ENCODE measurements at regions of chr7 and their contacts with region 1.

Region 1: GRCh38 chr7:1412322-1413261 is 46.7 kb downstream of the MICALL2 start:
- DNase-seq: peak; percentile 100
- H3K4me3 ChIP-seq: no peak overlapping the region; a peak in 2 of 4 replicates
- H3K27ac ChIP-seq: no peak overlapping the region
- H3K4me1 ChIP-seq: peaks cover 0 to 5% of the 10 kb centered on the region in 2 experiments; a peak in 2 of 4 replicates
- H3K27me3 ChIP-seq: peaks cover 76% of the 10 kb centered on the region
- CTCF ChIP-seq: peak; percentile 92
- EP300 ChIP-seq: no peak
- RAD21 ChIP-seq: peak; percentile 80

Region 2: DNA sequence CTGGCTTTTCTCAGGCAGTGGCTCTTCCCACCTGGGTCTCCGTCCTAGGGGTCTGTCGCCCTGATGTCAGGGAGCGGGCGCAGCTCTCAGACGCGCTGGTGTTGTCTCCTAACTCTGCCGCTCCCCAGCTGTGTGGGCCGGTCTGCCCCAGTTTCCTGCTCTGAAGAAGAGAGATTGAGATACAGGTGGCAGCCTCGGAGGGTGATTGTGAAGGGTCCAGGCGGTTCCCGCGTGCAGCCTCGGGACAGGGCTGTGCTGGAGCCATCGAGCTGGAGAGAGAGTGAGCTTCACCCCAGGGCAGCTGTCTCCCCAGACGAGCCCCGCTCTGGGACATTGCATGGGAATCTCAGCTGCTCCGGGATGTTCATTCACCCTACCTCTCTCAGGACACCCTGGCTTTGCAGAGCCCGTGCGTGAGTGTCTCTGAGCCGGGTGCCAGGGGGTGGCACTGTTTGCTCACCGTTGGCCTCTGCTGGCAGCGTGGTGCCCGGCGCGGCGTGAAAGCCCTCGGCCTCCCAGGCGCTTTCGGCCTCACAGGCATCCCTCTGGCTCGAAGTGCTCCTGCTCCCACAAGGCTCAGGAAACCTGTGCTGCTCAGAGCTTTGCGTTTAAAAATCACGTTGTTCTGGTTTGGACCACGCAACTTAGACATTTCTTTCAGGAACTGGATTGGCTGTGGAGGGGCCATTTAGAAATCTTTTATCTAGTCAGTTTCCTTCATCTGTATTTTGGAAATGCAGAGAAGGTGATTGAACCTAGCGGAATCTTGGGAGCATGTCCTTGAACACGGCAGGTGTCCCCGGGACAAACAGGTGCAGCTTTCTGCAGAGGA is 218.8 kb before region 1 on chr7:
- CTCF ChIA-PET with region 1: interaction called, 42 read pairs
- POLR2A ChIA-PET with region 1: no interaction called
- DNase-seq: peak; percentile 90
- H3K4me3 ChIP-seq: no peak overlapping the region
- H3K27ac ChIP-seq: no peak overlapping the region
- H3K4me1 ChIP-seq: peaks cover 0 to 3% of the 10 kb centered on the region in 2 experiments; a peak in 1 of 4 replicates
- H3K27me3 ChIP-seq: peaks cover 29% of the 10 kb centered on the region; the same call in 1 of the 2 replicates
- CTCF ChIP-seq: peak; percentile 75
- EP300 ChIP-seq: no peak
- RAD21 ChIP-seq: peak; percentile 90

Region 3: DNA sequence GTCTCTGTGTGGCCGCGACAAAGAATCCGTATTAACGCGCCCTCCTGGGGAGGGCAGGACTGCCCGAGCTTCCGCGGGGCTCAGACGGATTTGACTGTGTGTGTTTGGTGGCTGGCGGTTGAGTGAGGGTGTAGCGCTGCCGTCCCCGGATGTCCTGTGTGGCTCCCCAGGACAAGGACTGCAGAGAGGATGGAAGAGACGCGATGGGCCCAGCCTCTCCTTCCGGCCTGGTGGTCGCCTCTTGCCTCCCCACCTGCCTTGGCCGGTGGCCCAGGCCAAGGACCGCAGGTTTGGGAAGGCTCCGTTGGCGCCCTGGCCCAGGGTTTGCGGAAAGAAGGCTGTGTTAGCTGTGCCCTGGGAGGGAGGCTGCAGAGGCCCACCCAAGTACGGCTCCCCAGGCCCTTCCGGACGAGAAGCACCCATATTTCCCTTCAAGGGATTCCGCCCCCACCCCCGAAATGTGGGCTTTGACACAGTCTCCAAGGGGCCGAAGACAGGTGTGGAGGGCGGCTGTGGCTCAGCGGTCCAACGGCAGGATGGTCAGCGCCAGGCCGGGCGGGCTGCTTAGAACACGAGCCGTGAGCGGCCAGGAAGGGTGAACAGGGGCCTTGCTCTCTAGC is 177.6 kb before region 1 on chr7:
- CTCF ChIA-PET with region 1: interaction called, 14 read pairs
- POLR2A ChIA-PET with region 1: no interaction called
- DNase-seq: no peak
- H3K4me3 ChIP-seq: no peak overlapping the region
- H3K27ac ChIP-seq: no peak overlapping the region
- H3K4me1 ChIP-seq: no peaks in the 10 kb centered on the region
- H3K27me3 ChIP-seq: peaks cover 84% of the 10 kb centered on the region
- CTCF ChIP-seq: no peak
- EP300 ChIP-seq: no peak
- RAD21 ChIP-seq: no peak

Region 4: GRCh38 chr7:1284743-1285321 is 127.8 kb before region 1 on chr7:
- CTCF ChIA-PET with region 1: interaction called, 12 read pairs
- POLR2A ChIA-PET with region 1: no interaction called
- DNase-seq: no peak
- H3K4me3 ChIP-seq: no peak overlapping the region
- H3K27ac ChIP-seq: no peak overlapping the region
- H3K4me1 ChIP-seq: no peaks in the 10 kb centered on the region
- H3K27me3 ChIP-seq: peaks cover 85% of the 10 kb centered on the region
- CTCF ChIP-seq: no peak
- EP300 ChIP-seq: no peak
- RAD21 ChIP-seq: no peak

Region 5: DNA sequence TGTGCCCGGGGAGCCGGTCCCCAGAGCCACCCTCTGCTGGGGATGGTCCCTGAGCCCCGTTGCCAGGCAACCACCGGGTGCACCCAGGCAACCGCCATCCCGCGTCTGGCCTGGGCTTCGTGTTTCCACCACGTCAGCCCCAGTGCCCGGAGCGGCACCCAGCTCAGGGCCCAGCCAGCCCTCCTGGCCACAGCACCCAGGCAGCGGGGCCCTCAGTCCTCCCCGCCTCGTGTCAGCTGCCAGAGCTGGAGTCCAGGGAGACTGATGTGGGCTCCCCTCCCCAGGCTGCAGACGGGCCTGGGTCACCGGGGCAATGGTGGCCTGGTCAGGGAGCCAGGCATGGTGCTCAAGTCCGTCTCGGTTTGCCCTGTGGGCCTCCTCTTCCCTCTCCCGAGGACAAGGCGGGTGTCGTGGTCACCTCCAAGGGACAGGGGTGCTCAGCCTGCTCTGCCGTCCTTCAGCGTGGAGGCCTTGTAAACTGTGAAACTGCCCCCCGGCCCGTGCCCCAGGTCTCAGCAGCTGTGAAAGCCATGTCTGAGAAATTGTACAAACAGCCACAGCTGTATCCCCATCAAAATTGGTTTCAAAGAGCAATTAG is 25.9 kb before region 1 on chr7:
- CTCF ChIA-PET with region 1: interaction called, 12 read pairs
- POLR2A ChIA-PET with region 1: no interaction called
- DNase-seq: peak; percentile 89
- H3K4me3 ChIP-seq: no peak overlapping the region
- H3K27ac ChIP-seq: no peak overlapping the region
- H3K4me1 ChIP-seq: no peaks in the 10 kb centered on the region; a peak in 1 of 4 replicates
- H3K27me3 ChIP-seq: peaks cover 97% of the 10 kb centered on the region
- CTCF ChIP-seq: no peak
- EP300 ChIP-seq: no peak
- RAD21 ChIP-seq: no peak

Region 6: GRCh38 chr7:2796358-2797352 is 1384.1 kb after region 1 on chr7:
- CTCF ChIA-PET with region 1: no interaction called
- POLR2A ChIA-PET with region 1: no interaction called
- DNase-seq: no peak
- H3K4me3 ChIP-seq: no peak overlapping the region
- H3K27ac ChIP-seq: no peak overlapping the region
- H3K4me1 ChIP-seq: peaks cover 0 to 4% of the 10 kb centered on the region in 2 experiments; a peak in 3 of 4 replicates
- H3K27me3 ChIP-seq: no peaks in the 10 kb centered on the region
- CTCF ChIP-seq: no peak
- EP300 ChIP-seq: no peak
- RAD21 ChIP-seq: no peak

Measured in SK-N-SH (cell line).